K562 (cell line): ENCODE measurements at regions of chr2 and their contacts with region 1.

Region 1: GRCh38 chr2:231713730-231714430 is 5.6 kb downstream of the PTMA start:
- DNase-seq: peak; percentile 43 to 85 (median 58)
- ATAC-seq: peak; percentile 62
- H3K4me3 ChIP-seq: no peak overlapping the region
- H3K27ac ChIP-seq: peak overlapping the region; percentile 37; the same call in 2 of the 3 replicates
- H3K4me1 ChIP-seq: peaks cover 32 to 63% of the 10 kb centered on the region in 2 experiments; a peak in 4 of 5 replicates
- H3K27me3 ChIP-seq: no peaks in the 10 kb centered on the region
- CTCF ChIP-seq: peak; percentile 74 to 84 (median 84)
- EP300 ChIP-seq: no peak
- POLR2A ChIP-seq: peak; percentile 80
- RAD21 ChIP-seq: peak; percentile 43 to 56; a peak in 3 of 4 replicates

Region 2: GRCh38 chr2:231563378-231563961 is 150.4 kb before region 1 on chr2:
- CTCF ChIA-PET with region 1: interaction called, 6 read pairs
- POLR2A ChIA-PET with region 1: no interaction called
- in situ Hi-C with region 1: no loop called
- intact Hi-C with region 1: loop called (anchors 1 kb)
- DNase-seq: peak; percentile 78 to 81 (median 80)
- ATAC-seq: peak; percentile 98
- H3K4me3 ChIP-seq: no peak overlapping the region
- H3K27ac ChIP-seq: no peak overlapping the region
- H3K4me1 ChIP-seq: no peaks in the 10 kb centered on the region; a peak in 1 of 5 replicates
- H3K27me3 ChIP-seq: no peaks in the 10 kb centered on the region; a peak in 1 of 5 replicates
- CTCF ChIP-seq: peak; percentile 56 to 78 (median 75)
- EP300 ChIP-seq: no peak
- POLR2A ChIP-seq: no peak
- RAD21 ChIP-seq: peak; percentile 19 to 58; a peak in 3 of 4 replicates

Region 3: DNA sequence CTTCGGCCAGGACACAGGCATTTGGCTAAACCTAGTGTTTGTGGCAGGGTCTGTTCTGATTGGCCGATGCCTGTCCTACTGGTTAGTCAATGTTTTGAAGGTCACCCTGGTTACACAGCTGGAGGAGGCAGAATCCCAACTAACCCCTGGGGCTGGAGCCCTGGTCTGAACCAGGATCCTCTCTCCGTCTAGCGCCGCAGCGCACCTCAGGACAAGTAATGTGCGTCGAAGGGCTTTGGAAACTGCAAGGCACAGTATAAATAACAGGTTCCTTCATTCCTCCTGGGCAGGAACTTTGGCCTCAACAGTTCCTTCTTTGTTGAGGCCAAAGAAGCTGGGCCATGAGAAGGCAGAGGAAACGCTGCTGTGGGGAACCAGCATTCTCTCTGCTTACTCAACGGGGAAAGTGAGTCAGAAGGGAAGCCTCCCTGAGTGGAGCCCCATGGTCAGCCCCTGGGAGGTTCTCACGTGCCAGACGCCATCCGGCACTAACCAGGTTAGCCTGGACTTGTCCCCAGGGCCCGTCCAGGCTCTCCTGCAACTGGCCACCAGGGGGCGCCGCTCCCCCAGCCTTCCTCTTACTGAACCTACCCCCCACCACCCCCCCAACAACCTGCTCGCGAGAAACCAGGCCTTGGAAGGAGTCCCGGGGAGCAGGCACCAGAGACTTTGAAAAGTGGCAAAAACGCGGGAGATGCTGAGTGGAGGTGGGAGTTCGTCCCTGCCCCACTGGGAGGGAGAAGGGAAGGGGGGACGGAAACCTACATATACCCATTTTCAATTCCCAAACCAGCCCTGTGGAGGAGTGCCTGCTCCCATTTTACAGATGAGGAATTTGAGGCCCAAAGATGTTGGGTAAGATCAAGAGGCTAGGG is 101.5 kb before region 1 on chr2:
- CTCF ChIA-PET with region 1: interaction called, 27 read pairs
- POLR2A ChIA-PET with region 1: interaction called, 11 read pairs
- in situ Hi-C with region 1: loop called (anchors 5 kb)
- intact Hi-C with region 1: loop called (anchors 1 kb)
- DNase-seq: peak; percentile 87 to 92 (median 88)
- ATAC-seq: peak; percentile 94
- H3K4me3 ChIP-seq: no peak overlapping the region
- H3K27ac ChIP-seq: peak overlapping the region; percentile 46; the same call in 1 of the 3 replicates
- H3K4me1 ChIP-seq: peaks cover 17 to 36% of the 10 kb centered on the region in 2 experiments; a peak in 4 of 5 replicates
- H3K27me3 ChIP-seq: peaks cover 0 to 4% of the 10 kb centered on the region in 2 experiments; a peak in 1 of 5 replicates
- CTCF ChIP-seq: peak; percentile 77 to 86 (median 82)
- EP300 ChIP-seq: no peak
- POLR2A ChIP-seq: no peak
- RAD21 ChIP-seq: peak; percentile 82 to 83

Region 4: GRCh38 chr2:231674587-231675338 is 39.1 kb before region 1 on chr2:
- CTCF ChIA-PET with region 1: interaction called, 45 read pairs
- POLR2A ChIA-PET with region 1: interaction called, 9 read pairs
- in situ Hi-C with region 1: loop called (anchors 5 kb)
- intact Hi-C with region 1: loop called (anchors 1 kb)
- DNase-seq: peak; percentile 56 to 69 (median 62)
- ATAC-seq: peak; percentile 75
- H3K4me3 ChIP-seq: no peak overlapping the region
- H3K27ac ChIP-seq: peak overlapping the region; percentile 48; the same call in 1 of the 3 replicates
- H3K4me1 ChIP-seq: peaks cover 19 to 43% of the 10 kb centered on the region in 2 experiments
- H3K27me3 ChIP-seq: no peaks in the 10 kb centered on the region
- CTCF ChIP-seq: peak; percentile 70 to 80 (median 76)
- EP300 ChIP-seq: no peak
- POLR2A ChIP-seq: no peak
- RAD21 ChIP-seq: peak; percentile 70 to 75

Region 5: GRCh38 chr2:231786177-231786916 is 72.5 kb after region 1 on chr2 and contains the start of gene COPS7B:
- CTCF ChIA-PET with region 1: no interaction called
- POLR2A ChIA-PET with region 1: no interaction called
- in situ Hi-C with region 1: no loop called
- intact Hi-C with region 1: loop called (anchors 2 kb)
- DNase-seq: peak; percentile 60 to 85 (median 72)
- ATAC-seq: peak; percentile 88
- H3K4me3 ChIP-seq: peak within 1 kb of the TSS; percentile 99
- H3K27ac ChIP-seq: peak within 1 kb of the TSS; percentile 76
- H3K4me1 ChIP-seq: peaks cover 9 to 13% of the 10 kb centered on the region in 2 experiments; a peak in 3 of 5 replicates
- H3K27me3 ChIP-seq: no peaks in the 10 kb centered on the region
- CTCF ChIP-seq: peak; percentile 55 to 71 (median 65)
- EP300 ChIP-seq: no peak; the same call in 1 of the 2 replicates
- POLR2A ChIP-seq: peak; percentile 67; the same call in 1 of the 2 replicates
- RAD21 ChIP-seq: peak in 1 of 2 experiments; percentile 30; a peak in 1 of 4 replicates
- polyA plus RNA-seq, gene COPS7B: 6.0 to 8.3 TPM